ENCODE measurements at regions of chr11 and their contacts with region 1.

Region 1: GRCh38 chr11:134882141-134882540 is 470.1 kb upstream of the B3GAT1 start:
- DNase-seq: no peak
- H3K4me3 ChIP-seq: no peak overlapping the region
- CTCF ChIP-seq: no peak

Region 2: GRCh38 chr11:134932761-134933160 is 50.6 kb after region 1 on chr11:
- in situ Hi-C with region 1: loop called (anchors 5 kb)
- DNase-seq: no peak
- H3K4me3 ChIP-seq: no peak overlapping the region
- CTCF ChIP-seq: no peak

Measured in astrocyte of the cerebellum (primary cell).